Dorsolateral prefrontal cortex (tissue), 120 donors: ENCODE measurements at regions of chr18 and their contacts with region 1.

Region 1: GRCh38 chr18:23586249-23587196 is at the start of gene NPC1:
- DNase-seq: peak; percentile 82 to 96 (median 90)
- H3K4me3 ChIP-seq: peak within 1 kb of the TSS; percentile 67 to 100 (median 95)
- H3K27ac ChIP-seq: peak within 1 kb of the TSS; percentile 92 to 100 (median 100)
- H3K27me3 ChIP-seq: no peaks in the 10 kb centered on the region
- CTCF ChIP-seq: peak; percentile 90 to 100 (median 98)
- total RNA-seq, gene NPC1: 45.2 to 321 (median 99.6) TPM

Region 2: DNA sequence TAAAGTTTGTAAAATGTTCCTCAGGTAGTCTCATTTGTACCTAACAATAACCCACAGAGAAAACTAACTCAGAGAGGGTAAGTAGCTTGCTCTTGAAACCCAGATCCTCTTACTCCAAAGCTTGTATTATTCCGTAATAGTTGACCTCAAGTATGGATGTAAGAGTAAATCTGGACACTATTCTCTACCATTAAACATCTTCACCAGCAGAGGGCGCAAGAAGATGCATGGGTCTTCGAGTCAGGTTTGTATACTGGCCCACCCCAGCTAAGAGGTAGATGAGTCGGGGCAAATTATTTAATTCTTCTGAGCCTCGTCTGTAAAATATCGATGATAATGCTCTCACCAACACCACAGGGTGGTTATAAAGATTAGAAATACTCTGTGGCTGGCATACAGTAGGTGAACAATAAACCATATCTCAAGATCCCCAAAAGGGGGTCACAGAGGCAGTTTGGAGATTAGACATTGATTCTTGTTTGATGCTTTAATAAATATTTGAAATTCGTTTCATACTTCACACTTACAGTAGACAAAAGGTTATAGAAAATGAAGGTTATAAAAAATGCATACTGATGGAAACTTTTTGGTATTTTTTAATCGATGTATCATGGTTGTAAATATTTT is 454.7 kb before region 1 on chr18:
- intact Hi-C with region 1: loop called in 1 of 2 experiments (anchors 5 kb)
- DNase-seq: peak in 3 of 10 donors; percentile 36 to 71 (median 63)
- H3K4me3 ChIP-seq: no peak overlapping the region
- H3K27ac ChIP-seq: peak overlapping the region in 1 of 59 donors; percentile 27
- H3K27me3 ChIP-seq: peaks cover 0 to 18% (median 0%) of the 10 kb centered on the region in 45 donors
- CTCF ChIP-seq: peak; percentile 63 to 90 (median 82)

Region 3: GRCh38 chr18:23452728-23453679 is 133.5 kb before region 1 on chr18 and contains the start of gene RIOK3:
- intact Hi-C with region 1: loop called in 1 of 2 experiments (anchors 5 kb)
- DNase-seq: peak; percentile 97 to 99 (median 99)
- H3K4me3 ChIP-seq: peak within 1 kb of the TSS; percentile 70 to 100 (median 94)
- H3K27ac ChIP-seq: peak within 1 kb of the TSS; percentile 57 to 98 (median 92)
- H3K27me3 ChIP-seq: no peaks in the 10 kb centered on the region
- CTCF ChIP-seq: peak in 29 of 56 donors; percentile 9 to 59 (median 33)
- total RNA-seq, gene RIOK3: 25.5 to 71.7 (median 52.1) TPM

Region 4: GRCh38 chr18:23515911-23516546 is 70.5 kb before region 1 on chr18:
- intact Hi-C with region 1: loop called (anchors 2 to 5 kb)
- DNase-seq: peak; percentile 60 to 87 (median 81)
- H3K4me3 ChIP-seq: peak overlapping the region in 1 of 59 donors; percentile 1
- H3K27ac ChIP-seq: peak overlapping the region in 42 of 59 donors; percentile 6 to 78 (median 48)
- H3K27me3 ChIP-seq: no peaks in the 10 kb centered on the region
- CTCF ChIP-seq: peak; percentile 60 to 93 (median 85)